ENCODE measurements at regions of chr2 and their contacts with region 1.

Region 1: DNA sequence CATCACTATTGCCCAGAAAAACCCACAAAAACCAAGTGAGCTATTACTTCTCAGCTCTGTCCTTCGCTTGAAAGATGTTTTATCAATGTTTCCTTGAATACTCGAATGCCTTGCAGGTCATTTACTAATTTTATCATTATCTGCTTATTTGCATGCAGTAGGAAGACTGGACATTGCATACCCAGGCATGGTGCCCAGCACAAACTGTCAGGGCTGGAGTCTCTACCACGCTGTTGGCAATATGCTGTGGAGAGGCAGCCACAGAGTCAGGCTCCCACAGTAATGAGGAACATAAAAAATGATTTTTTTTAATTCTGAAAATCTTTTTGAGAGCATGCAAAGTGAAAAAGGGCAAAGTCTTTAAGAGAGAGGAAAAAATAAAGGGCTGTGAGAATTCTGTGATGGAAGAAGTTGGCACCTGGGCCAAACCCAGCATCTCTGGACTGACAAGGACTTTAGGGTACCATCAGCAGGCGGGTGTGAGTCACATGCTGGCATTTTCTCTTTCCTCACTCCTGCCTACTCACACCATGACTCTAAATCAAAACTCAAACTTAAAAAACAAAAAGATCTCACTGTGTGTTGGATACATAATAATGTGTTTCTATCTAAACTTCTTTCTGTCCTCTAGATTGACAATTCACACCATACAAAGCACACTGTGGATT is 709.8 kb upstream of the FANCL start:
- DNase-seq: no peak
- H3K4me3 Mint-ChIP-seq: no peak overlapping the region
- H3K27ac Mint-ChIP-seq: no peak overlapping the region
- H3K4me1 Mint-ChIP-seq: no peaks in the 10 kb centered on the region
- H3K27me3 Mint-ChIP-seq: no peaks in the 10 kb centered on the region

Region 2: GRCh38 chr2:58918141-58918540 is 32.8 kb before region 1 on chr2:
- intact Hi-C with region 1: no loop called
- DNase-seq: no peak
- H3K4me3 Mint-ChIP-seq: no peak overlapping the region
- H3K27ac Mint-ChIP-seq: no peak overlapping the region
- H3K4me1 Mint-ChIP-seq: no peaks in the 10 kb centered on the region
- H3K27me3 Mint-ChIP-seq: no peaks in the 10 kb centered on the region

Region 3: DNA sequence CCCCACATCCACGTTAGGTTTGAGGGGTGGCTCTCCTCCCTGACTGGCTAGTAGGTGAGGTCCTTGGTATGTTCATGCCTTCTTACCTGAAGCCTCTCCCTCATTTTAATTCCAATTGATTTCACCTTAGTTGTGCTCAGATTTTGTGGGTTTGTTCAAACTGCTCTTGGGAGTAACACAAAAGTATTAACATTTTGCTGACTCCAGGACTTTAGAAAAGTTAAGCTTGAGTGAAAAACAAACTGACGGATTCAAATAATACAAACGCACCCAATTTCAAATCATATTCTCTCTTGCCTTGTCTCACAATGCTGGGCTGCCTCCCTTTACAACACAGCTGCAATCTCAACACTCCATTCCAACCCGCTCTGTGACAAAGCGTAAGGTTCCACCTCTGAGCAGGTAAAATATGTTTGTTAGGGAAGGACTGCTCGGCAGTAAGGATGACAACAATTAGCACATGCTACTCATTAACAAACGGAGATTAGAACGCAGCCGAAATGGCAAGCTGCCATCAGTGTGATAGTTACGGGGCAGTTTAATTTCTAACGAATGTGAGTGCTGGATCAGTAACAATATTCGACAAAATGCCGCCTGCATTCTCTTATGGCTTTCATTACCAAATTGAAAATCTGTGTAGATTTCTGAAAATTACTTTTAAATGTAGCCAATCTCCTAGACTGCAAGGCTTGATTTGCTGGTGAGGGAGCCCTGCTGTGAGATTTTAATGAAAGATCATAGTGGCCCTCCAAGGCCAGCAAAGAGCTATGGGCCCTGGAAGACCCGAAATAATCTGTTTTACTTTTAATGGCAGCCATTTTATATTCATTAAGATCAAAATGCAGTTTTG is 20.8 kb after region 1 on chr2:
- intact Hi-C with region 1: loop called (anchors 2 kb)
- DNase-seq: no peak
- H3K4me3 Mint-ChIP-seq: no peak overlapping the region
- H3K27ac Mint-ChIP-seq: no peak overlapping the region
- H3K4me1 Mint-ChIP-seq: no peaks in the 10 kb centered on the region
- H3K27me3 Mint-ChIP-seq: no peaks in the 10 kb centered on the region

Measured in activated T-helper 1 cell treated with anti-CD3 and anti-CD28 coated beads, Interleukin-12 subunit alpha, Interleukin-12 subunit beta, Interleukin-2, Interleukin-4 antibody, amounts not matched to agents 30 ng/mL and 10 ng/mL and 1 ng/mL, durations not matched to agents 14 hours and 24 hours and 36 hours (primary cell).